ENCODE measurements at regions of chr10 and their contacts with region 1.

Region 1: GRCh38 chr10:117442944-117443685 is 67.9 kb upstream of the PDZD8 start:
- DNase-seq: peak; percentile 87
- H3K4me3 ChIP-seq: no peak overlapping the region
- H3K27ac ChIP-seq: no peak overlapping the region
- H3K4me1 ChIP-seq: peaks cover 5% of the 10 kb centered on the region
- H3K27me3 ChIP-seq: peaks cover 1 to 2% of the 10 kb centered on the region in 2 experiments
- CTCF ChIP-seq: peak; percentile 83 to 96
- POLR2A ChIP-seq: no peak

Region 2: GRCh38 chr10:117216611-117217195 is 226.4 kb before region 1 on chr10:
- CTCF ChIA-PET with region 1: interaction called, 37 read pairs
- POLR2A ChIA-PET with region 1: no interaction called
- dilution Hi-C with region 1: no loop called
- intact Hi-C with region 1: loop called (anchors 2 kb)
- DNase-seq: peak; percentile 59
- H3K4me3 ChIP-seq: peak overlapping the region in 2 of 3 experiments; percentile 41 to 50
- H3K27ac ChIP-seq: no peak overlapping the region
- H3K4me1 ChIP-seq: peaks cover 5% of the 10 kb centered on the region
- H3K27me3 ChIP-seq: peaks cover 1 to 7% of the 10 kb centered on the region in 2 experiments
- CTCF ChIP-seq: peak; percentile 99 to 100
- POLR2A ChIP-seq: no peak

Region 3: DNA sequence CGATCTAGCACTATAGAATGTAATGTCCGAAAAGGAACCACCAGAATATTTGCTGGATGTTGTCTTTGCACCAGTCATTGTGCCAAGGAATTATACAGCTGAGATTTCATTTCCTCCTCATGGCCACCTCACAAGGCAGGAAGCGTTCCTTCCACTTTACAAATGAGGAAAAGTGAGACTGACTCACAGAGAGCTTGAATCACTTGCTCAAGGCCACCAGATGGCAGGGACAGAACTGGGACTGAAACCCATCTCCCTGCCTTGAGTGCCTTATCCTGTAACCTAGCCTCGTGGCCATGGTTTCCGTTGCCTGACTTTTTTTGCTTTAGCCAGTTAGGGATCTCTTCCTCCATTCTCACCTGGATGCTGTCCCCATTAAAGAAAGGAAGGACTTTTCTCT is 23.2 kb before region 1 on chr10:
- CTCF ChIA-PET with region 1: interaction called, 21 read pairs
- POLR2A ChIA-PET with region 1: no interaction called
- dilution Hi-C with region 1: no loop called
- intact Hi-C with region 1: no loop called
- DNase-seq: peak; percentile 12
- H3K4me3 ChIP-seq: no peak overlapping the region
- H3K27ac ChIP-seq: no peak overlapping the region
- H3K4me1 ChIP-seq: no peaks in the 10 kb centered on the region
- H3K27me3 ChIP-seq: no peaks in the 10 kb centered on the region
- CTCF ChIP-seq: no peak
- POLR2A ChIP-seq: no peak

Region 4: GRCh38 chr10:117461766-117462423 is 18.8 kb after region 1 on chr10:
- CTCF ChIA-PET with region 1: interaction called, 190 read pairs
- POLR2A ChIA-PET with region 1: interaction called, 4 read pairs
- dilution Hi-C with region 1: no loop called
- intact Hi-C with region 1: loop called (anchors 1 kb)
- DNase-seq: peak; percentile 95
- H3K4me3 ChIP-seq: no peak overlapping the region
- H3K27ac ChIP-seq: peak overlapping the region; percentile 89
- H3K4me1 ChIP-seq: peaks cover 38% of the 10 kb centered on the region
- H3K27me3 ChIP-seq: no peaks in the 10 kb centered on the region
- CTCF ChIP-seq: no peak
- POLR2A ChIP-seq: no peak

Region 5: GRCh38 chr10:117483056-117483604 is 40.0 kb after region 1 on chr10:
- CTCF ChIA-PET with region 1: interaction called, 279 read pairs
- POLR2A ChIA-PET with region 1: no interaction called
- dilution Hi-C with region 1: no loop called
- intact Hi-C with region 1: loop called (anchors 1 kb)
- DNase-seq: no peak
- H3K4me3 ChIP-seq: no peak overlapping the region
- H3K27ac ChIP-seq: no peak overlapping the region
- H3K4me1 ChIP-seq: no peaks in the 10 kb centered on the region
- H3K27me3 ChIP-seq: peaks cover 0 to 2% of the 10 kb centered on the region in 2 experiments
- CTCF ChIP-seq: no peak
- POLR2A ChIP-seq: no peak

Region 6: DNA sequence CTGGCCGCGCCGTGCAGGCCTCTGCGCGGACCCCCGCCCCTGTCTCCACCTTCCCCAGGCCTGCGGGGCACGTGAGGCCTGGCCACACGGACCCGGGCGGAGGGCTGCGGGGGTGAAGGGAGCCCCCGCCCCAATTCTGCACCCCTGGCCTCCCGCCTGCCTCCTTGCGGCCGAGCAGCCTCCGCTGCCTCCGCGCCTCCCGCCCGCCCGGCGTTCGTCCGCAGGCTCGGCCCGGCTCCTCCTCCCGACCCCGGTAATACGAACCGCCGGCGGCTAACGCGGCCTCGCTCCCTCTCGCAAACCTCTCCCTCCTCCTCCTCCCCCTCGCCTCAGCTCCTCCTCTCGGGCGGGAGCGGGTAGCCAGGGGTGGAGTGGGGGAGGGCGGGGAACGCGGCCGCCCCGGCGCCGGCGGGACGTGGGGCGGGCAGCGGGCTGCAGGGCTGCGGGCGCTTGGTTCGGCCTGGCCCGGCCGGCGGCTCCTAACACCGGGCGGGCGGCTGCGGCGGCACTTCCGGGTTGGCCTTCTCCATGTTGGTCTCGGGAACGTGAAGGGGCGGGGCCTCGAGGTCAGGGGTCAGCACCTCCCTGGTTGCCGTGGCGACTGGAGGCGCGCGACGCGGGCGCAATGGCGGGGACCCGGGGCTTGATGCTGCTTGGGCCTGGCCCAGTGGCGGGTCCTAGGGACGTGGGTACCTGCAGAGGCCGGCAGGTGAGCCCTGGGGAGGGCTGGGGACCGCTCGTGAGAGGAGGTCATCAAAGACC is 603.5 kb after region 1 on chr10 and contains the start of gene RAB11FIP2:
- CTCF ChIA-PET with region 1: interaction called, 3 read pairs
- POLR2A ChIA-PET with region 1: no interaction called
- dilution Hi-C with region 1: no loop called
- intact Hi-C with region 1: loop called (anchors 10 kb)
- DNase-seq: peak; percentile 86
- H3K4me3 ChIP-seq: peak within 1 kb of the TSS; percentile 49 to 88 (median 79)
- H3K27ac ChIP-seq: peak within 1 kb of the TSS; percentile 47
- H3K4me1 ChIP-seq: peaks cover 31% of the 10 kb centered on the region
- H3K27me3 ChIP-seq: no peaks in the 10 kb centered on the region
- CTCF ChIP-seq: peak in 1 of 2 donors; percentile 11
- POLR2A ChIP-seq: peak; percentile 34
- total RNA-seq, gene RAB11FIP2: 8.6 and 12.6 TPM in 2 replicates

Measured in endothelial cell of umbilical vein (primary cell).